ENCODE measurements at regions of chr2 and their contacts with region 1.

Region 1: GRCh38 chr2:224369028-224369632 is 32.8 kb downstream of the FAM124B start:
- DNase-seq: peak; percentile 26
- ATAC-seq: no peak
- H3K4me3 Mint-ChIP-seq: no peak overlapping the region
- H3K27ac Mint-ChIP-seq: no peak overlapping the region
- H3K4me1 Mint-ChIP-seq: no peaks in the 10 kb centered on the region
- H3K27me3 Mint-ChIP-seq: peaks cover 1% of the 10 kb centered on the region
- CTCF ChIP-seq: peak; percentile 85

Region 2: GRCh38 chr2:224357098-224357901 is 11.8 kb before region 1 on chr2:
- CTCF ChIA-PET with region 1: interaction called, 12 read pairs
- POLR2A ChIA-PET with region 1: no interaction called
- intact Hi-C with region 1: no loop called
- DNase-seq: peak; percentile 61
- ATAC-seq: peak; percentile 65
- H3K4me3 Mint-ChIP-seq: no peak overlapping the region
- H3K27ac Mint-ChIP-seq: no peak overlapping the region
- H3K4me1 Mint-ChIP-seq: no peaks in the 10 kb centered on the region
- H3K27me3 Mint-ChIP-seq: peaks cover 2% of the 10 kb centered on the region
- CTCF ChIP-seq: peak; percentile 82

Region 3: DNA sequence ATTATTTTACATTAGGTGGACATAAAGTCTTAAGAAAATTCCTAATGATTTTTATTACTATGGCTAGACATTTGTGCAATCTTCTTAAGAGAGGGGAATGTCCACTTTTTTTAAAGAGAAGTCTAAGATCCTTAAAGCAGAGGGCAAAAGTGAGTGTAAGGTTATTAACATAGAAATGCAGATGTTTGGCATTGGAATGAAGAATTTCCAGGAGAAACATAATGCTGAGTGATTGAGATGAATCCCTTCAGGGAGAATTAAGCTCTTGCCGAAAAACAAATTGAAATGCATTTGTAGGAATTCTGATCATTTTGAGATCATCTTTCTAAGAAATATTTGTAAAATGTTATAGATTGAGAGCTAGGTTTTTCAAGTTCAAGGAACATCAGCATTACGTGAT is 17.7 kb after region 1 on chr2:
- CTCF ChIA-PET with region 1: interaction called, 10 read pairs
- POLR2A ChIA-PET with region 1: no interaction called
- intact Hi-C with region 1: no loop called
- DNase-seq: no peak
- ATAC-seq: no peak
- H3K4me3 Mint-ChIP-seq: no peak overlapping the region
- H3K27ac Mint-ChIP-seq: no peak overlapping the region
- H3K4me1 Mint-ChIP-seq: no peaks in the 10 kb centered on the region
- H3K27me3 Mint-ChIP-seq: no peaks in the 10 kb centered on the region
- CTCF ChIP-seq: no peak

Region 4: DNA sequence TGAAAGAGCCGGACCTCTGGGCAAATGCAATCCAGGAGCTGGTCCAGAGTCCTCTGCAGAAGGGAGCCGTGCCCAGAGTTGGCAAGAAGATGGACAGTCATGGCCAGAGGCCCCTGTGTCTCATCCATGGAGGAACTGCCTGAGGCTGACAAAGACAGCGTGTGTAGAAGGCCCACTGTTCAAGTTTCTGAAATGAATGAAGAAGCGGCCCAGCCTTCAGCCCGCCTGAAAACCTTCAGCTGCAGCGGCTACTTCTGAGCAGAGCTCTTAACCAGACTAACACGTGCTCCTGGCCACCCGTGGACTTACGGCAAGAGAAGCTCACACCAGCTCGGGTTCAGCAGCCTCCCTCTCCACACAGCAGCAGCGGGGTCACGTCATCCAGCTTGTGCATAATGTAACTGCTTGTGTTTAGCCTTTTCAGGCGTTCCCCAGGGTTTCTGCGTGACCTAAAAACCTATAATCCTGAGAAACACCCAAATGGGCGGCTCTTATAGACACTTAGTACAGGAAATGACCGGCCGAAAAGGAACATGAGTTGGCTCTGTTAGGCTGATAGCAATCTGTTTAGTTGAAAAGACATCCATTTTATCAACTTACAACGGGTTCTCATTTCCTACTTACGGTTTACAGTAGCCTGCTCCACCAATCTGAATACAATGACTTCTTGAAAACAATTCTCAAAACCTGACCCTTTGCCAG is 32.7 kb after region 1 on chr2 and contains the start of gene FAM124B:
- CTCF ChIA-PET with region 1: interaction called, 12 read pairs
- POLR2A ChIA-PET with region 1: no interaction called
- intact Hi-C with region 1: no loop called
- DNase-seq: peak; percentile 47
- ATAC-seq: peak; percentile 81
- H3K4me3 Mint-ChIP-seq: peak within 1 kb of the TSS; percentile 57
- H3K27ac Mint-ChIP-seq: peak within 1 kb of the TSS; percentile 64
- H3K4me1 Mint-ChIP-seq: peaks cover 7% of the 10 kb centered on the region
- H3K27me3 Mint-ChIP-seq: peaks cover 14% of the 10 kb centered on the region
- CTCF ChIP-seq: no peak
- total RNA-seq, gene FAM124B: 0.25 TPM in 1 of 2 experiments, not detected in the other

Region 5: GRCh38 chr2:224608104-224608503 is 239.0 kb after region 1 on chr2:
- CTCF ChIA-PET with region 1: interaction called, 10 read pairs
- POLR2A ChIA-PET with region 1: no interaction called
- intact Hi-C with region 1: no loop called
- DNase-seq: no peak
- ATAC-seq: no peak
- H3K4me3 Mint-ChIP-seq: no peak overlapping the region
- H3K27ac Mint-ChIP-seq: no peak overlapping the region
- H3K4me1 Mint-ChIP-seq: peaks cover 3% of the 10 kb centered on the region
- H3K27me3 Mint-ChIP-seq: peaks cover 2% of the 10 kb centered on the region
- CTCF ChIP-seq: no peak

Region 6: DNA sequence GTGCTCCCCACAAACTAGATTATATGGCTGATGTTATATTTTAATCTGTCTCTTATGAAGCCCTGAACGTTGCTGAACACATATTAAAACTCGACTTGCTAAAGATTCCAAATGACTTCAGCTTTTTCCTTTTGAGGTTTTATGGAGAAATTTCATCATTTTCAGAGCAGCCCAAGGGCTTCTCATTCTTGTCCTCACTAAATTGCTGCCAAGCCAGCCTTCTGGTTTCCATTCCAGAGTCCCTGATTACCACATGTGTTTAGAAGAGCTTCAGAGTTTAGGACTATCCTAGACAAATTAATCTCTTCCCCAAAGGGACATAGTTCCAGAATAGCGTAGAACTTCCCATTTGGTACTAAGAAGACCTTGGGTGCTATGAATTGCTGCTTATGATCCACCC is 424.8 kb after region 1 on chr2:
- CTCF ChIA-PET with region 1: no interaction called
- POLR2A ChIA-PET with region 1: no interaction called
- intact Hi-C with region 1: no loop called
- DNase-seq: no peak
- ATAC-seq: no peak
- H3K4me3 Mint-ChIP-seq: no peak overlapping the region
- H3K27ac Mint-ChIP-seq: peak overlapping the region; percentile 45
- H3K4me1 Mint-ChIP-seq: no peaks in the 10 kb centered on the region
- H3K27me3 Mint-ChIP-seq: no peaks in the 10 kb centered on the region
- CTCF ChIP-seq: no peak

Measured in activated CD8-positive, alpha-beta T cell treated with anti-CD3 and anti-CD28 coated beads for 36 hours (primary cell).